GM10248 (cell line): ENCODE measurements at regions of chr3 and their contacts with region 1.

Region 1: DNA sequence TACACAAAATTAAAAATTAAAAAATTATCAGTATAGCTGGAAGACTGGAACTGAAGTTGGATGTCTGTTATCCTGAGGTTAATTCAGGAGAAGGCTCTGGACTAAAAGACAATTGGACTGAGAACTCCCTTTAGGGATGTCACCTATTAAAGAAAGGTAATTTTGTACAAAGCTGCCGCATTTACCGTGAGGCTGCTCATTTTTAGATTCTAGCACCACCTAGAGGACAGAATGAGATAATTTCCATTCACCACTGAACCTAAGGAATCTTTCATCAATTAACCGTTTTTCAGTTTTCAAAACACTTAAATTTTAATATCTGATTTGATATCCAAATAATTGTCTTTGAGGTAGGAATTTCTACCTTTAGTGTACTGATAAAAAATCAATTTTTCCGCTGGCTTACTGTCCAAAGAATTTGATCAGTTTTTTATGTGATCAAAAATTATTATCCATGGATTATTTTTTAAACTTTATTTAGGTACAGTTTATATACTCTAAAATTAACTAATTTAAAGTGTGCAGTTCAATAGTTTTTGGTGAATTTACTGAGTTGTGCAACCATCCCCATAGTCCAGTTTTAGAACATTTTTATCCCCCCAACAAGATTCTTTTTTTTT is 106.7 kb upstream of the TNIK start:
- DNase-seq: peak; percentile 56
- CTCF ChIP-seq: peak; percentile 63

Region 2: DNA sequence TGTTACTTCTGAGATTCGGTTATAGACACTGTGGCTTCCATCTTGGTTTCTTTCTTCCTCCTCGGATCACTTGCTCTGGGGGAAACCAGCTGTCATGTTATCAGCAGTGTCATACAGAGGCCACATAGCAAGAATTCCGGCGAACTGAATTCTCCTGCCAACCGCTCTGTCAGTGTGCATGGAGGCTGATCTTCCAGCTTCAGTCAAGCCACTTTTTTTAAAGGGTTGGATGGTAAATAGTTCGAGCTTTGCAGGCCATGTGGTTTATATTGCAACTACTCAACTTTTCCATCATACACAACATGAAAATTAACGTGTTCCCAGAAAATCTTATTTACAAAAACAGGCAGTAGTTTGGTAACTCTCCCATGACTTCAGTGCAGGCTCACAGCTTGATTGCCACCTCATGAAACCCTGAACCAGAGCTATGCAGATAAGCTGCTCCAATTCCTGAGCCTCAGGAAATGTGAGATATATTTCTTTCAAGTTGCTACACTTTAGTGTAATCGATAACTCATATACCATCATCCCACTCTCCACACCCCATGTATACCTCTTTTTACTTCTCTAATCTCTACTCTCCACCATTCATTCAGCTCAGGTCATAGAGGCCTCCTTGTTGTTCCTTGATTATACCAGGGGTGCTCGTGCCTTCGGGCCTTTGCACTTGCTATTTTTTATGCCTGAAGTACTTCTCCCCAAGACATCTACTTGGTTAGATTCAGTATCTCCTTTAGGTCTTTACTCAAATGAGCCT is 704.1 kb before region 1 on chr3:
- CTCF ChIA-PET with region 1: no interaction called
- POLR2A ChIA-PET with region 1: no interaction called
- DNase-seq: no peak
- CTCF ChIP-seq: no peak

Region 3: GRCh38 chr3:170961616-170962400 is 605.1 kb before region 1 on chr3:
- CTCF ChIA-PET with region 1: interaction called, 29 read pairs
- POLR2A ChIA-PET with region 1: no interaction called
- DNase-seq: no peak
- CTCF ChIP-seq: peak; percentile 37

Region 4: GRCh38 chr3:171162986-171163723 is 403.8 kb before region 1 on chr3:
- CTCF ChIA-PET with region 1: interaction called, 44 read pairs
- POLR2A ChIA-PET with region 1: no interaction called
- DNase-seq: peak; percentile 60
- CTCF ChIP-seq: peak; percentile 74

Region 5: DNA sequence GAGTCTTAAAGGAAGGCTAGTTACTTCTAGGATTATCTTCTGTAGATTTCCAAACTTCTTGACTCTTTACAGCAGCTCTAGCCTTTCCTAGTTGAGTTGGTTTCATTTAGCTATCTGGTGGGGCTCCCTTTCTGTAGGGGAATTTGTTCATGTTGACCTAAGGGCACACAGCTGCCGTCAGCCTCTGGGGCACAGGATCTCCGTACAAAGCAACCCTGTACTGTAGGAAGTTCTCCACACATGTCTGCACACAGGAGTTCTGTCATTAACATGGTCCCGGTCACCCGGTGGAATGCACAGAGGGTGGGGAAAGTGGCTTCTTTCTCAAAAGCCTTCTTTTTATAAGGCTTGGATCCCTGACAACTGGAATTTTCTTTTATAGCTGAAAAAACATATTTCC is 18.0 kb before region 1 on chr3:
- CTCF ChIA-PET with region 1: interaction called, 15 read pairs
- POLR2A ChIA-PET with region 1: no interaction called
- DNase-seq: no peak
- CTCF ChIP-seq: no peak

Region 6: GRCh38 chr3:171585029-171585428 is 18.1 kb after region 1 on chr3:
- CTCF ChIA-PET with region 1: interaction called, 10 read pairs
- POLR2A ChIA-PET with region 1: no interaction called
- DNase-seq: no peak
- CTCF ChIP-seq: no peak